ENCODE measurements at regions of chr6 and their contacts with region 1.

Region 1: DNA sequence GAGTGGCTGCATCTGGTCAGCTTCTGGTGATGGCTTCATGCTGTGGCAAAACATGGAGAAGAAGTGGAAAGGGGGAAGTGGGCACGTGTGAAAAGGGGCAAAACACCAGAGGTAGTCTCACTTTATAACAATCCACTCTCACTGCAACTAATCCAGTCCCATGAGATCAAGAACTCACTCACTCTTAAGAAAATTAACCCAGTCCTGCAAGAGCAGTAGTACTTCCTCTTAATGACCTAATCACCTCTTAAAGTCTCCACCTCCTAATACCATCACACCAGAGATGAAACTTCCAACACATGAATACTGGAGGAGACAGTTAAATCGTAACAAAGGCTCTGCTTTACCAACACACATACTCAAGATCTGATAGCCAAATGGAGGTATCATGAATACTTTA is 152.6 kb downstream of the THEMIS start:
- DNase-seq: no peak
- H3K4me3 Mint-ChIP-seq: peak overlapping the region; percentile 44
- H3K27ac Mint-ChIP-seq: peak overlapping the region; percentile 74
- H3K4me1 Mint-ChIP-seq: peaks cover 58% of the 10 kb centered on the region
- H3K27me3 Mint-ChIP-seq: no peaks in the 10 kb centered on the region

Region 2: GRCh38 chr6:127582777-127583462 is 165.4 kb before region 1 on chr6:
- CTCF ChIA-PET with region 1: no interaction called
- POLR2A ChIA-PET with region 1: no interaction called
- intact Hi-C with region 1: no loop called
- DNase-seq: no peak
- H3K4me3 Mint-ChIP-seq: no peak overlapping the region
- H3K27ac Mint-ChIP-seq: no peak overlapping the region
- H3K4me1 Mint-ChIP-seq: peaks cover 8% of the 10 kb centered on the region
- H3K27me3 Mint-ChIP-seq: peaks cover 6% of the 10 kb centered on the region

Region 3: GRCh38 chr6:127786109-127786508 is 37.8 kb after region 1 on chr6:
- CTCF ChIA-PET with region 1: no interaction called
- POLR2A ChIA-PET with region 1: no interaction called
- intact Hi-C with region 1: loop called (anchors 2 kb)
- DNase-seq: no peak
- H3K4me3 Mint-ChIP-seq: no peak overlapping the region
- H3K27ac Mint-ChIP-seq: no peak overlapping the region
- H3K4me1 Mint-ChIP-seq: peaks cover 61% of the 10 kb centered on the region
- H3K27me3 Mint-ChIP-seq: no peaks in the 10 kb centered on the region